Dorsolateral prefrontal cortex (tissue), 120 donors: ENCODE measurements at regions of chr1 and their contacts with region 1.

Region 1: GRCh38 chr1:193104906-193105820 is at the start of gene GLRX2:
- DNase-seq: peak; percentile 73 to 91 (median 82)
- H3K4me3 ChIP-seq: peak within 1 kb of the TSS; percentile 67 to 99 (median 86)
- H3K27ac ChIP-seq: peak within 1 kb of the TSS; percentile 60 to 98 (median 94)
- H3K27me3 ChIP-seq: no peaks in the 10 kb centered on the region
- CTCF ChIP-seq: peak in 37 of 56 donors; percentile 14 to 67 (median 37)
- total RNA-seq, gene GLRX2: 14.2 to 51.8 (median 35.5) TPM

Region 2: DNA sequence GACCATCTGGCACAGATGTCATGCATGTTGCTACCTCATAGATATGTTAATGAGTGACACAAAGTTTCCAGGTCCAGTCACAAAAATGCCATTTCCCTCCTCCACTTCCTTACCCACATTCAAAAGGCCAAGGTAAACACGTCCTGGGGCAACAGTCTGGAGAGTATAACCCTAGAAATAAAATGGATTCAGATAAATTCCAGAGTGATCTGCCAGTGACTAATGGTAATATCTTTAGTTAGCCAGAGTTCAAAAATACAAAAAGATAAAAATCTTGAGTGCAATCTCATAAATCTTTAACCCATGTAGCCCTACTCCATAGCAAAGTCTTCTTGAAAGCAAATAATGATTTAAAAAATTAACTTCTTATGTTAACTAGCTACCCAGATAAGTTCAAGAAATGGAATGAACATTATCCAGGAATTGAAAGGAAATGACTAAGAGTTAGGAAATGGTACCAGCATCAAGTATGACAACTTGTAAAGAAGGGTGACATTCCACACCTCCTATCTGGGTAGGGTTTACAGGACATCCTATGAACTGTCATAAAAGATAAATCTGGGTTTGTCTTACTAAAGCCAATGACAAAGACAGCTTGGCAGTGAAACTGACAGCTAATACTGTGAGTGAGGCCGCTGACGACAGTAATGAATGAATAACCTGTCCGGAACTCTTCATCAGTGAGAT is 278.2 kb before region 1 on chr1:
- intact Hi-C with region 1: no loop called
- DNase-seq: no peak
- H3K4me3 ChIP-seq: no peak overlapping the region
- H3K27ac ChIP-seq: no peak overlapping the region
- H3K27me3 ChIP-seq: peaks cover 0 to 5% (median 0%) of the 10 kb centered on the region in 45 donors
- CTCF ChIP-seq: no peak

Region 3: DNA sequence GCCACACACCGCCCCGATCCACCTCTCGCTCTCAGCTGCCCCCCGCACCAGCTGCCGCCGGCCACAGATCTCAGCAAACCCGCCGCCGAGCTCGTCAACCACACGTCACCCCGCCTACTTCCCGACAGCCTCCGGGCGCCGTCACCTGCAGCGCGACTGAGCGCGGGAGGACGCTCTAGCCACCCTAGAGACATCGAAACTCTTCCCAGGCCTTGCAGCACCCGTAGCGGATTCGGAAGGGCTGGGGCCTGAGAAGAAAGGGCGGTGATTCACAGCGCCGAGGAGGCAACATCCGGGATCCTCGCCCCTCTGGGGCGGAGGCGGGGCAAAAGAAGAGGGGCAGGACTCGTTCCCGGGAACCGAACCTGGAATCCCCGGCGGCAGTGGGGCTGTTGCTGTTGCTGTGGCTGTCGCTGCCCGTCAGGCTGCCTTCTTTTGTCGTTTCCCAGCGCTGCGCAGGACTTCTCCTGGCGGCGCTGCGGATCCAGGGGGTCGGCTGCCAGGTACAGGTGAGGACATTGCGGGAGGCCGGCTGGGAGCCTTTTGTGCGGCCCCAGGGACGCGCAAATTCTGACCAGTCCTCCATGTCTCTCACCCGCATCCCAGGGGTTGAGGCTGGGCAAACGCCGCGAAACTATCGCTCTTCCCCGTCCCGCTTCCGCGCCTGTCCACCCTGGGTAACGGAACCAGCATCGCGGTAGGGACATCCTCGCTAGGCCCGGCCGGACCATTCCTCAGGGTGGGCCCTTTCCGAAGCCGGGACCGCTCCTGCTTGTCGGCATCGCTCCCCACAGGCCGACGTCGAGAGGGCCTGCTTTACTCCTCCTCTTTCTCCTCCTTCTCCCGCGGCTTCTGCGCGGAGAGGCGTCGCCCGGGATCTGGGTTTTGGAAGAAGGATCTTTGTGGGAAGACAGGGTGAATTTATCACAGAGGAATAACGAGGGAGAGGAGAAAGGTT is 45.6 kb before region 1 on chr1 and contains the starts of genes RO60 and UCHL5:
- intact Hi-C with region 1: loop called (anchors 2 to 5 kb)
- DNase-seq: peak; percentile 89 to 98 (median 96)
- H3K4me3 ChIP-seq: peak within 1 kb of the TSS; percentile 55 to 97 (median 88)
- H3K27ac ChIP-seq: peak within 1 kb of the TSS; percentile 65 to 99 (median 95)
- H3K27me3 ChIP-seq: no peaks in the 10 kb centered on the region
- CTCF ChIP-seq: peak in 47 of 56 donors; percentile 14 to 71 (median 43)
- total RNA-seq, gene RO60: 58.5 to 126 (median 77.6) TPM
- total RNA-seq, gene UCHL5: 23.2 to 70.9 (median 51.2) TPM